GM10248 (cell line): ENCODE measurements at regions of chr1 and their contacts with region 1.

Region 1: DNA sequence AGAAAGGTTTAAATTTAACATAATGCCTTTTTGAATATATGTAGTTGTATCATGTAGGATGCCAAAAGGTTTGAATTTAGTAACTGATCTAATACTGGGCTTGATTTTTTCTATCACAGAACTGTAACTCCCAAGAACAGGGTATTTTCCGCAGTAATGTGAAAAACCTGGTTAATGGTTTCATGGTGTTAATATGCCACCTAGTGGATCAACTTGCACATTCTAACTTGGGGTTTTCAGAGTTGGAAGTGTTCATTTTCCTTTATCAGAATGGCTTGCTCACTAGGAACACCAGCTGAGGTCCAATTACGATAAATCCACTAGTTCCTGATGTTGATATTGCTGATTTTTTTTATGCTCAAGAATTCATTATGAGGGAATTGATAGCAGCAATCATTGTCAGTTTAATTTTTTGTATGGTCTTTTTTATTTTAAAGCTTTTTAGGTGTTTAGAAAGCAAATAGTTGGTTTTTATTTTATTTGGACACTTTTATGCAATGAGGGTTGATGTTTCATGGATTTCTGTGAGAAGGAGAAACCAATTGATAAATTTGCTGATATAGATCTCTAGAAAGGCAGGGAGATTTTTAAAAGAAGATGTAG is 157.2 kb downstream of the PLA2G4A start:
- DNase-seq: peak; percentile 38
- CTCF ChIP-seq: peak; percentile 72

Region 2: DNA sequence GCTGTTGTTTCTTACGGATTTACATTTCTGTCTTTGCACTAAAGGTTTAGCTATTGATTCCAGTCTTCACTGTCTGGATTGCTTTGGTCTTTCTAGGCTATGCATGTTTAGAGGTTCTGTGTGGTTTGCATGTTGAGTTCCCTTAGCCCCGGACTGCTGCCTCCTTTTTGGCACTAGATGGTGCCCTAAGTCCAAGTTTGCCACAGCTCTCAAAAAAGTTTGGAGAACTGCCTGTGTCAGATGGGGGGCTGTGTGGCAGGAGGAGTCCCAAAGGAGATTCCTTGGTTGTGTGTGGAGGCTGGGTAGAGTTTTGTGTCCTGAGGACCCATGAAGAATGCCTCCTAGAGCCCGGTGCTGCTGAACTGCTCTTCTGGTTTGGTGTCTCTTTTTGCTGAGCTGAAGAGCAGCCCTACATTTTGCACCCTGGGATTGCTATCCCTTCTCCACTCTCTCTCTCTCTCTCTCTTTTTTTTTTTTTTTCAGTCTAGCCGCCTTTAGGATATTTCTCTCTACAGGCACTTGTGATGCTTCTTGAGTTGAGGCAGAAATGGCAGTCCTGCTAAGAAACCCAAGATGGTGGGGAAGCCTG is 380.1 kb before region 1 on chr1:
- CTCF ChIA-PET with region 1: interaction called, 10 read pairs
- POLR2A ChIA-PET with region 1: no interaction called
- DNase-seq: peak; percentile 32
- CTCF ChIP-seq: peak; percentile 62